Ascending aorta (tissue), 2 donors: ENCODE measurements at regions of chr9 and their contacts with region 1.

Region 1: DNA sequence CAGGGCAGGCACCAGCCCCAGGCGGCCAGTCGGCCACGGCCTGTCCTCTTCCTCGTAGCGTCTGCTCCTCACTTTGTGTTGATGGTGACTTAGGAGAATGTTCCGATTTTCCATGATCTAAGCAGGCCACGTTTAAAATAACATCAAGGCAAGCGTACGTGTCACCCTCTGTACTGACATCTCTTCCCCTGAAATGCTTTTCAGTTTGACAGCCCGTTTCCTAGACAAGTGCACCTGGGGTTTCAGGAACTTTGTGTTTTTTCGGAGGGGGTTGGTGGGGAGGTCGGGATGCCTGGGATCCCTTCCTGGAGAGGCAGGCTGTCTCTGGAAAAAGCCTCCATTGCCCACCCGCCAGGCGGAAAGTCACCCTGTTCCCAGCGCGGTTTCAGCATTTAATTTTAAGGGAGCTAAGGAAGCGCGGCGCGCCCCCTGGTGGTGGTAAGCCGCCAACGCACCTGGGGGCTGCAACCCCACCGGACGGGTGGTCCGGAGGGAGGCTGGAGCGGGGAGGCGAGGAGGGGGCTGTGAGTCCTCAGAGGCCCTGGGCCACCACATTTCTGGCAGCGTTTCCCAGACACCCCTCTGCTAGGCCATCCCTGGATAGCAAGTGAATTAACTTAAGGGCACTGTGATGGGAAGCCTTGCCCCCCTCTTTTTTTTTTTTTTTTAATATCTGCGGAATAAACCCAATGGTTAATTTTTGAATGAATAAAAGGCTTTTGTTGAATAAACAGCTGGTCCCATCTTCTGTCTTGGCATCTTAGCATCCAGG is 29.5 kb upstream of the HMCN2 start:
- DNase-seq: peak in 1 of 2 donors; percentile 87
- H3K4me3 ChIP-seq: peak overlapping the region in 1 of 2 donors; percentile 50
- H3K27ac ChIP-seq: peak overlapping the region; percentile 36 to 48
- H3K4me1 ChIP-seq: peaks cover 3 to 7% of the 10 kb centered on the region in 2 donors
- H3K27me3 ChIP-seq: no peaks in the 10 kb centered on the region
- CTCF ChIP-seq: peak; percentile 98 to 100 (median 99)

Region 2: DNA sequence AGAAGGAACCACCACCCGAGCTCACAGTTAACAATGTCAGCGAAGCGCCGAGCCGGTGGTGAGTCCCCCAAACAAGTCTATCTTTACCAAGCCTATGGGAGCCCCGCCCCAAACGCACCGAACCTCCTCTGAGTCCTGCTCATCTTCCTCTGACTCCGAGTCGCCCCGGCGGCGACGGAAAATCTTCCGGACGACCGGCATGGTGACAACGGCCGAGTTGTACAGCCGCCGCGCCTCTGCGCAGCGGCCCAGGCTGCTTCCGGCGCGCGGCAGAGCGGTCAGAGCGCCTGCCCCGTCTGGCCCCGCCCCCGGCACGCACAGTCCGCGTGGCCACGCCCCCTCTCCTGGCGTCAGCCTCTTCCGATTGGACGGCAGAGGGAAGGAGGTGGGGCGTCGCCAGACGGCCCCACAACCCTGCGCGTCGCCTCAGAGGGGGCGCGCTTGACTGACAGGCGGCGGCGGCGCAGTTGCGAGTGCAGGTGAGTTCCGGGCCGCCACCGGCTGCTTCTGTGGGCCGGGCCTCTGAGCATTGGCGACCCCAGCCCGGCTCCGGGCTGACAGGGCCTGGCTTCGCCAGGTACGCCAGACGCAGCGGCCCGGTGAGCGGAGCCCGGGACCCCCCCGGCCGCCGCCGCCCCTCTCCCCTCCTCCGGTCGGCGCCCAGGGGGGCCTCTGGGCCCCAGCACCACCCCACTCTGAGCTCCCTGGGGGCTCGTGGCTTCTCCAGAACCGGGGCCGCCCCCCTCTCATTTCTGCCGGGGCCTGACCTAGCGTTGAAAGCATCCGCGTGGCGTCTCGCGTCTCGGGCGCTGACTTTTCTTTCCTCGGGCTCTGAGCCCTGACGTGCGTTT is 400.8 kb before region 1 on chr9 and contains the starts of genes C9orf78 and USP20:
- intact Hi-C with region 1: loop called (anchors 10 kb)
- DNase-seq: peak; percentile 67 to 97
- H3K4me3 ChIP-seq: peak within 1 kb of the TSS; percentile 93 to 100
- H3K27ac ChIP-seq: peak within 1 kb of the TSS; percentile 95 to 98
- H3K4me1 ChIP-seq: peaks cover 5 to 42% of the 10 kb centered on the region in 2 donors
- H3K27me3 ChIP-seq: no peaks in the 10 kb centered on the region
- CTCF ChIP-seq: no peak
- total RNA-seq, gene C9orf78: 19.2 TPM
- total RNA-seq, gene USP20: 34.0 TPM

Region 3: GRCh38 chr9:129954868-129955550 is 281.1 kb before region 1 on chr9:
- intact Hi-C with region 1: no loop called
- DNase-seq: no peak
- H3K4me3 ChIP-seq: no peak overlapping the region
- H3K27ac ChIP-seq: peak overlapping the region in 1 of 2 donors; percentile 46
- H3K4me1 ChIP-seq: peaks cover 0 to 6% of the 10 kb centered on the region in 2 donors
- H3K27me3 ChIP-seq: no peaks in the 10 kb centered on the region
- CTCF ChIP-seq: no peak

Region 4: DNA sequence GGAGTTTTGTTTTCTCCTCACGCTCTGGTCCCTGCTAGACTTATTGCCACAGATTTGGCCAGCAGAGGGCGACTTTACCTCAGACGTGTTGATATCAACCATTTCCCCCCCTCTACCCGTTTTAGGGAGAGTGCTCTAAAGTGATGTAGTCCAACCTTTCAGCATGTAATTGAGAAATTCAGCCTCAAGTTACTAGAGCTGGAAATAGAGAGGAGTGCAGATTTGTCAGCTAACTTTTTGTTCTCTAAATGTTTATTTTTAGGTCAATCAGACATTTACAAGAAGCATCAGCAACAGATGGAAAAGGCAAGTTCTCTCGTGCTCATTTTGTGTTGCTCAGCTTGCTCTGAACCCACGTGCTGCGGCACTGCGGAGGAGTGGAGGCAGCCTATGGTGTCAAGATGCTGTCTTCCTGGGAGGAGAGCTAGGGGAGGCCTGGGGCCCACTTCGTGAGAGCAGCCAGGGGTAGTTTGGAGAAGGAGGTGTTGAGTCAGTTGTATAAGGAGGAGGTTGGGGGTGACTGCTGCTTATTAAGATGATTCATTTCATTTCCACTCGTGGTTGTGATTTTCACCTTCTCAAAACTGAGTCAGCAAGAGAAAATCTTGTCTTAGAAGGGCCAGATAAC is 128.7 kb before region 1 on chr9:
- intact Hi-C with region 1: loop called (anchors 1 kb)
- DNase-seq: peak in 1 of 2 donors; percentile 89
- H3K4me3 ChIP-seq: no peak overlapping the region
- H3K27ac ChIP-seq: no peak overlapping the region
- H3K4me1 ChIP-seq: no peaks in the 10 kb centered on the region
- H3K27me3 ChIP-seq: no peaks in the 10 kb centered on the region
- CTCF ChIP-seq: peak; percentile 77 to 81 (median 80)

Region 5: DNA sequence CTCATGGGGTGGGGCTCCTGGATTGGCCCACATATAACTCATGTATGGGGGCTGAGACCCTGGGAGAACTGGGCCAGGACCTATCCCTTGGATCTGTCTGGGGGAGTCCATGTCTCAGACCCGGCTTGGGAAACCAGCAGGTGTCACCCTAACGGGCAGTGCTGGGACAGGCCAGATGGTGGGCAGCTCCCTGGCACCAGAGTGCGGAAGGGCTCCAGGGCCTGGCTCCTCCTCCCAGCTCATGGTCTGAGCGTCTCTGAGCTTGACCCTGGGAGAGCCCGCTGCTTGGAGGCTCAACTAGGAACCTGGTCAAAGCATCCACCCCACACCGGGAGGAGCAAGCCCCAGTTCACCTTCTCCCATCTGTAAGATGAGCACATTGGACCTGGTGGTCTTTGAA is 79.4 kb before region 1 on chr9:
- intact Hi-C with region 1: loop called (anchors 1 kb)
- DNase-seq: peak in 1 of 2 donors; percentile 79
- H3K4me3 ChIP-seq: no peak overlapping the region
- H3K27ac ChIP-seq: no peak overlapping the region
- H3K4me1 ChIP-seq: no peaks in the 10 kb centered on the region
- H3K27me3 ChIP-seq: no peaks in the 10 kb centered on the region
- CTCF ChIP-seq: peak; percentile 48 to 62 (median 54)

Region 6: GRCh38 chr9:130172161-130172857 is 63.8 kb before region 1 on chr9 and contains the start of gene NCS1:
- intact Hi-C with region 1: loop called (anchors 2 kb)
- DNase-seq: peak in 1 of 2 donors; percentile 89
- H3K4me3 ChIP-seq: peak within 1 kb of the TSS; percentile 72 to 97
- H3K27ac ChIP-seq: peak within 1 kb of the TSS; percentile 90 to 97
- H3K4me1 ChIP-seq: peaks cover 4 to 25% of the 10 kb centered on the region in 2 donors
- H3K27me3 ChIP-seq: no peaks in the 10 kb centered on the region
- CTCF ChIP-seq: no peak
- total RNA-seq, gene NCS1: 34.7 TPM

Region 7: DNA sequence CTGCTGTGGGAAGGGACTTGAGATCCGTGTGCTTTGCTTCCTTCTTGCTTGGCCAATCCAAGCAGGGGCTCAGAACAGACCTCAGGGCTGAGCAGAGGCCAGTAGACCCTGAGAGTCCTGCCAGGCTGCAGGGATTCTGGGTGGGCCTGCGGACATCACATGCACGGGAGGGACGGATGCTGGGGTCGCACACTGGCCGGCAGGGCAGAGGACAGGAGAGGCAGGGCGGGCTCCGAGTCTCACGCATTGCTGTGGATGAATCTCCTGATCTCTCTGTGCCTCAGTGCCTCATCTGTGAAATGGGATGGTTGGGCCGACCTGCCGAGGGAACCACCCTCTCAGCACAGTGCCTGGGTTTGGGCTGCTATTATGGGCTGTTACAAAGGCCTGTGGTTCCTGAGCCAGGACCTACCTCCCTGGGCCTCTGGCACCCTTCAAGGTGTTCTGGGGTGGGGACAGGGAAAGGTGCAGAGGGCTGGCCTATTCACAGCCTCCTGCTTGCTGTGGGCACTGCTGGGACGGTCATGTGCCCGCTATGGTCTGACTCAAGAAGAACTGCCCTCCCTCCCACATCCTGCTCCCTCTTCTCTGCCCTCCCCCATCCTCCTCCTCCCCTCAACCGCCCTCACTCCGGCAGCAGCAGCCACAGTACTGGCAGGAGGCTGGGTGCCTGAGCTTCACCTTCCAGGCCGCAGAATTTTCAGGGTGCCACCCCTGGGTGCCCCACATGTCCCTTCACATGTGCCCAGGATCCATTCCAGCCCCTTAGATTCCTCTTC is 20.6 kb before region 1 on chr9:
- intact Hi-C with region 1: no loop called
- DNase-seq: no peak
- H3K4me3 ChIP-seq: no peak overlapping the region
- H3K27ac ChIP-seq: peak overlapping the region; percentile 22
- H3K4me1 ChIP-seq: peaks cover 0 to 8% of the 10 kb centered on the region in 2 donors
- H3K27me3 ChIP-seq: no peaks in the 10 kb centered on the region
- CTCF ChIP-seq: no peak